HEK293T (cell line): ENCODE measurements at regions of chr3 and their contacts with region 1.

Region 1: DNA sequence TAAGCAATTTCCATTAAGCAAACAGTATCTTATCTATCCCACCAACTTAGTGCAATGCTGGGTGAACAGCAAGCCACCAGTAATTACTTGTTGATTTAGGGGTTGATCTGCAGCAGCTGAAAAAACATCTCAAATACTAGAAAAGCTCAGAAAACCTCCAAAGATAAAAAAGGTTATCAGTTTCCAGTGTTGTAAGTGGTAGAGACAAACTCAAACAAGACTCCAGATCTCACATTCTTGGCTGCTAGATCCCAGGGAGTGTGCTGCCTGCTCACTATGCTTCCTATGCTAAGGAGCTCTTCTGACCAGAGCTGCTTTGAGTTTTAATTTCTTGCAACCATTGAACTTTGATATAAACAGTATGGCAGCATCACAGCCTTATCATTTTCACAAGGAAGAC is 11.3 kb downstream of the B3GALNT1 start:
- DNase-seq: no peak

Region 2: DNA sequence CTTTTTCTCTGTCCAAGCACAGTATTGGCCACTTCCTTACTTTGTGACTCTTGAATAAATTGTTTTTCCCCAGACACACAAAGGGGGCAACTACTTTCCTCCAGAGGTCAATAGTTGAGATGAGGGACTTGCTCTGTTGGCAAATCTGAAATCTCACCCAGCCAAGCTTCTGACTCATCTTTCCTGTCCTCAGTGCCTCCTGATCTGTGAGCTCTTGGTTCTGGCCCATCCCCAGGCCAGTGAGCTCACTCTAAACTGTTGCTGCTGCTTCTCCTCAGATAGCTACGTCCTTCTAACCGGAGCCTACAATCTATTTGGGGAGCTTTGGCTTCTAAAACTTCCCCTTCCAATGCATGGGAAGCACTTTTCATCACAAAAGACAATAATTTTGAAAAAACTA is 77.2 kb after region 1 on chr3:
- CTCF ChIA-PET with region 1: interaction called, 13 read pairs
- POLR2A ChIA-PET with region 1: no interaction called
- DNase-seq: no peak